ENCODE measurements at regions of chr15 and their contacts with region 1.

Region 1: DNA sequence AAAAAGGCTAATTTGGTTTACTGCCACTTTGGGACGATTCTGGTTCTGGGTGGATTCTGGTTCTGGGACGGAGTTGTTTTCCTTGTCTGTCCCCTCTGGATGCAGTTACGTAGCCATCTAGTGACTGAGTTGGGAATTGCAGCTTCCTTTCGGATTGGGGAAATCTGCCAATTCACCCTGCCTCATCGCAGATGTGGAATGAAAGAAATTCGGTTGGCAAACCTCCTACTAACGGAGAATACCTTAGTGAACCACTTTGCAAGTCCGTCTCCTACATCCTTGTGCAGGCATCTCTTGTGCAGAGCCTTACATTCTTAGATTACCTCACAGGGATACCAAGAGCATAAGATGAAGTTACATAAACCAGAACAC is 31.5 kb upstream of the AP4E1 start:
- DNase-seq: peak; percentile 92
- H3K4me3 Mint-ChIP-seq: peak overlapping the region; percentile 65
- H3K27ac Mint-ChIP-seq: peak overlapping the region; percentile 83
- H3K4me1 Mint-ChIP-seq: peaks cover 74% of the 10 kb centered on the region
- H3K27me3 Mint-ChIP-seq: peaks cover 10% of the 10 kb centered on the region
- CTCF ChIP-seq: peak; percentile 95

Region 2: GRCh38 chr15:50675536-50676144 is 201.3 kb before region 1 on chr15:
- CTCF ChIA-PET with region 1: interaction called, 3 read pairs
- intact Hi-C with region 1: loop called (anchors 1 kb)
- DNase-seq: peak; percentile 27
- H3K4me3 Mint-ChIP-seq: no peak overlapping the region
- H3K27ac Mint-ChIP-seq: no peak overlapping the region
- H3K4me1 Mint-ChIP-seq: peaks cover 9% of the 10 kb centered on the region
- H3K27me3 Mint-ChIP-seq: no peaks in the 10 kb centered on the region
- CTCF ChIP-seq: peak; percentile 68

Region 3: GRCh38 chr15:50765195-50765973 is 111.6 kb before region 1 on chr15 and contains the start of gene SPPL2A:
- CTCF ChIA-PET with region 1: no interaction called
- intact Hi-C with region 1: loop called (anchors 2 kb)
- DNase-seq: peak; percentile 85
- H3K4me3 Mint-ChIP-seq: peak within 1 kb of the TSS; percentile 82
- H3K27ac Mint-ChIP-seq: peak within 1 kb of the TSS; percentile 76
- H3K4me1 Mint-ChIP-seq: peaks cover 40% of the 10 kb centered on the region
- H3K27me3 Mint-ChIP-seq: no peaks in the 10 kb centered on the region
- CTCF ChIP-seq: no peak
- total RNA-seq, gene SPPL2A: 96.5 and 115 TPM in 2 replicates

Measured in Calu3 (cell line).